ENCODE measurements at regions of chr6 and their contacts with region 1.

Region 1: GRCh38 chr6:116531675-116532570 is 13.6 kb downstream of the TRAPPC3L start:
- DNase-seq: peak; percentile 64
- H3K4me3 Mint-ChIP-seq: no peak overlapping the region
- H3K27ac Mint-ChIP-seq: no peak overlapping the region
- H3K4me1 Mint-ChIP-seq: no peaks in the 10 kb centered on the region
- H3K27me3 Mint-ChIP-seq: peaks cover 12% of the 10 kb centered on the region

Region 2: GRCh38 chr6:116217069-116217468 is 314.9 kb before region 1 on chr6:
- CTCF ChIA-PET with region 1: interaction called, 8 read pairs
- POLR2A ChIA-PET with region 1: no interaction called
- intact Hi-C with region 1: loop called (anchors 2 kb)
- DNase-seq: no peak
- H3K4me3 Mint-ChIP-seq: no peak overlapping the region
- H3K27ac Mint-ChIP-seq: no peak overlapping the region
- H3K4me1 Mint-ChIP-seq: no peaks in the 10 kb centered on the region
- H3K27me3 Mint-ChIP-seq: no peaks in the 10 kb centered on the region

Region 3: DNA sequence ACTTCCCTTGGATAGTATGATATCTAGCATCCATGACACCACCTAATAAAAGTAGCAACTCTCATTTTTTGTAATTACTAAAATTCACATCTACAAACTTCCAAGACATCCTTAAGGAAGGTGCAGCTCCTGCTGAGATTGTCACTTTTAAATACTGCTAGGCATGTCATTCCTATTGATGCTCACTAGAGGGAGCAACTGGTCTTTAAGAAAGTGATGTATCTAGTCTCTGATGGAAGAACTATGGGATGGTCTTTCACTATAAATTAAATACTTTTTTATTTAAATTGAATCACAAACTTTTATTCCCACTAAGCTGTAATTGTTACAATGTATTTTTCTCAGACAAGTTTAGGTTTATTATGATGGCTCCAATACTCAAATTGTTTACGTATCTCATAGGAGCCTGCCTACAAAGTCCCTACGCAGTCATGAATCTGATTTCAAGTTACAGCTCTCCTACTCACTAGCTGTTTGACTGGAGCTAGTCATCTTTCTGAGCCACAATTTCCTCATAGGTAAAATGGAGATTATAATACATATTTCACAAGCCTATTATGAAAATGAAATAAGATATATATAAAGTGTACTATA is 244.1 kb before region 1 on chr6:
- CTCF ChIA-PET with region 1: interaction called, 82 read pairs
- POLR2A ChIA-PET with region 1: no interaction called
- intact Hi-C with region 1: loop called (anchors 1 kb)
- DNase-seq: no peak
- H3K4me3 Mint-ChIP-seq: no peak overlapping the region
- H3K27ac Mint-ChIP-seq: no peak overlapping the region
- H3K4me1 Mint-ChIP-seq: no peaks in the 10 kb centered on the region
- H3K27me3 Mint-ChIP-seq: no peaks in the 10 kb centered on the region

Region 4: DNA sequence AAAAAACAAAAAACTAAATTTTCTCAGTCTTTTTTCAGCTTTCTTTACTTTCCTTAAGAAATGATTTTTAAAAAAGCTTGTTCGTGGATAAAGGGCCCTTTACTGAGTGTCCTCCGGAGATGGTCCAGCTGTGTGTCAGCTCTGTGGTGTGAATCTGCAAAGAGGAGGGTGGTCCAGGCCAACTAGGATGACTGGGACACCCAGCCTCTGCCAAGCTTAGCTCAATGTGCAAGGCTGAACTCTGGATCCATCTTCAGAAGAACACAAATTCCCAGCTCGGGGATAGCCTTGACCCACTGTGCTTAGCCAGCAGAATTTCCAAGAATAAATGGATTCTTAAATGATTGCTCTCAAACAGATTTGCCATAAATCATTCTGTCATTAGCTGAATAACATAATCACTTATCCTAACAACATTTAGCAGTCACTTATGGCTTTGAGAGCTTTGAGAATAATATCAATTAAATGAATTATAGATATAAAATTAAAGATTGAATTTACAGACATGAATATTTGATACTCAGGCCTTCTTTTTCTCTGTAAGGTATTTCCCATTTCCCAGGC is 34.7 kb before region 1 on chr6:
- CTCF ChIA-PET with region 1: interaction called, 11 read pairs
- POLR2A ChIA-PET with region 1: no interaction called
- intact Hi-C with region 1: no loop called
- DNase-seq: no peak
- H3K4me3 Mint-ChIP-seq: no peak overlapping the region
- H3K27ac Mint-ChIP-seq: no peak overlapping the region
- H3K4me1 Mint-ChIP-seq: peaks cover 2% of the 10 kb centered on the region
- H3K27me3 Mint-ChIP-seq: peaks cover 20% of the 10 kb centered on the region

Region 5: DNA sequence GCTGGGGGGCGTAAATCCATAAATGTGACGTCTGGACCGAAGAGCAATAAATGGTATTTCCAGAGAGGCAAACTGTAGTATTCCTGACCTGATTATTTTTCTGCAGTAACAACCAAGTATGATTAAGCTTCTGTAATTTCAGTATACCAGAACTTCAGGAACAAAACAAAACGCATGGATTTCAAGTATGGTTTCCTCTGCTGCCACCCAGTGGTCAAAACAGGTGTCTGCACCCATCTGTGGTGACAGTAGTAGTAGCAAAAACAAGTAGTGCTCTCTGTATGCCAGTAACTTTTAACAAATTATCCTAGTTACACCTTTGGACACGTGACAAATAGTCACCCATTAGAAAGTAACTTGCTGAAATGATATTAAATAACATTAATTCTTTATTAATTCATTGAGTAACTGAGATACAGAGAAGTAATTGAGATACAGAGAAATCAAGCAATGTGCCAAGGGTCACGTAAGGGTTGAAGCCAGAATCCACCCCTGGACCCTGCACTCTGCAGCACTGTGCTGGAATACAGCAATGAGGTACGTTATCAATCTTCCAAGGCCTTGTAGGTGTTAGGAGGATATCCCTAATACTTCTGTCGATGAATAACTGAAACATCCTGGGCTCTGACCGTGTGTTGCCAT is 29.6 kb after region 1 on chr6:
- CTCF ChIA-PET with region 1: interaction called, 38 read pairs
- POLR2A ChIA-PET with region 1: no interaction called
- intact Hi-C with region 1: loop called (anchors 1 kb)
- DNase-seq: peak; percentile 76
- H3K4me3 Mint-ChIP-seq: no peak overlapping the region
- H3K27ac Mint-ChIP-seq: no peak overlapping the region
- H3K4me1 Mint-ChIP-seq: peaks cover 2% of the 10 kb centered on the region
- H3K27me3 Mint-ChIP-seq: peaks cover 23% of the 10 kb centered on the region

Region 6: GRCh38 chr6:116631379-116631990 is 99.6 kb after region 1 on chr6:
- CTCF ChIA-PET with region 1: no interaction called
- POLR2A ChIA-PET with region 1: no interaction called
- intact Hi-C with region 1: no loop called
- DNase-seq: no peak
- H3K4me3 Mint-ChIP-seq: no peak overlapping the region
- H3K27ac Mint-ChIP-seq: no peak overlapping the region
- H3K4me1 Mint-ChIP-seq: no peaks in the 10 kb centered on the region
- H3K27me3 Mint-ChIP-seq: no peaks in the 10 kb centered on the region

Region 7: DNA sequence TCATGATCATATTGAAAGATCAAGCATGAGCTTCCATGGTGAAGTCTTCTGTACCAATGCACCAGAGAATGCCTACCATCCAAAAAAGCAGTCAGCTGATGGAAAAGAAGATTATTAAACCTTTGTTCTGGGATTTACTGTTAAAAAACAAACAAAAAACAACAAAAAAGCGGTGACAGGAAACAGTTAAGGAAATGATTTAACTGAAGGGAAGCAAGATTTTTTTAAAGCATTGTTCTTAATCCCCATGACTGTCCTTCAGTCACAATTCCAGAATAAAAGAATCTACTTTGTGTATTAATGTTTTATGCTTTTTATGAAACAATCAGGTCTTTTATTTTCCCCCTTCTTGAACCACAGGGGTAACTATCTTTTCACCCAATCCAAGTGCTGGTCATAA is 209.6 kb after region 1 on chr6:
- CTCF ChIA-PET with region 1: no interaction called
- POLR2A ChIA-PET with region 1: no interaction called
- intact Hi-C with region 1: no loop called
- DNase-seq: no peak
- H3K4me3 Mint-ChIP-seq: no peak overlapping the region
- H3K27ac Mint-ChIP-seq: no peak overlapping the region
- H3K4me1 Mint-ChIP-seq: no peaks in the 10 kb centered on the region
- H3K27me3 Mint-ChIP-seq: no peaks in the 10 kb centered on the region

Region 8: GRCh38 chr6:116847227-116847626 is 315.3 kb after region 1 on chr6:
- CTCF ChIA-PET with region 1: no interaction called
- POLR2A ChIA-PET with region 1: no interaction called
- intact Hi-C with region 1: loop called (anchors 1 kb)
- DNase-seq: no peak
- H3K4me3 Mint-ChIP-seq: no peak overlapping the region
- H3K27ac Mint-ChIP-seq: no peak overlapping the region
- H3K4me1 Mint-ChIP-seq: no peaks in the 10 kb centered on the region
- H3K27me3 Mint-ChIP-seq: peaks cover 1% of the 10 kb centered on the region

Measured in activated CD4-positive, alpha-beta memory T cell treated with anti-CD3 and anti-CD28 coated beads for 36 hours (primary cell).